ENCODE measurements at regions of chr2 and their contacts with region 1.

Region 1: DNA sequence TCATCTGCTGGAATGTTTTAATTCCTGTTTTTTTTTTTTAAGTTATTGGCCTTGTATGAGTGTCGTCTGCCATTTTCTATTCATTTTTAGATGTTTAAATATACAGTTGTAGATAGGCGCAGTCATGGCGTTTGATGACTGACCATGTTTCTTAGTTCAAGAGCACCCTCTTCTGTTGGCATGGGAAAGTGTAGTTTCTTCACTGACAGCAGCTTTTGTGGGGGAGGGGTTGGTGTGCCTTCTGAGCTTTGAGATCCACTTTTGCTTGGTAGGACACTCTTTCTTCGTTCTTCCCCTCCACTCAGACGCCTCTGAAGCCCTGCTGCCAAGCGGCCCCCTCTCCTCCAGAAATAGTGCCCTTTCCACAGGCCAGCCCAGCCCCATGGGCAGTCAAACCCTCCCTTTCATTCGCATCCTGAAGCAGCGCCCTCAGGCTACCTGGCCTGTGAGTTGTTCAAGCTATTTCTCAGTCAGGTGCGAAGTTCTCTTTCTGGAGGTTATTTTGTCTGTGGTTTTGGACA is 492.0 kb downstream of the TNS1 start:
- DNase-seq: peak; percentile 88
- ATAC-seq: peak; percentile 85
- H3K4me3 ChIP-seq: no peak overlapping the region
- H3K27ac ChIP-seq: no peak overlapping the region
- H3K4me1 ChIP-seq: peaks cover 11% of the 10 kb centered on the region
- H3K27me3 ChIP-seq: no peaks in the 10 kb centered on the region
- CTCF ChIP-seq: peak; percentile 86

Region 2: GRCh38 chr2:216681683-216682082 is 829.1 kb before region 1 on chr2:
- CTCF ChIA-PET with region 1: no interaction called
- POLR2A ChIA-PET with region 1: no interaction called
- intact Hi-C with region 1: loop called (anchors 1 kb)
- DNase-seq: no peak
- ATAC-seq: no peak
- H3K4me3 ChIP-seq: no peak overlapping the region
- H3K27ac ChIP-seq: no peak overlapping the region
- H3K4me1 ChIP-seq: peaks cover 5% of the 10 kb centered on the region; the same call in 1 of the 2 replicates
- H3K27me3 ChIP-seq: no peaks in the 10 kb centered on the region
- CTCF ChIP-seq: no peak

Region 3: GRCh38 chr2:217000404-217000803 is 510.4 kb before region 1 on chr2:
- CTCF ChIA-PET with region 1: no interaction called
- POLR2A ChIA-PET with region 1: no interaction called
- intact Hi-C with region 1: loop called (anchors 1 kb)
- DNase-seq: peak; percentile 27
- ATAC-seq: peak; percentile 64
- H3K4me3 ChIP-seq: no peak overlapping the region
- H3K27ac ChIP-seq: no peak overlapping the region
- H3K4me1 ChIP-seq: no peaks in the 10 kb centered on the region
- H3K27me3 ChIP-seq: no peaks in the 10 kb centered on the region
- CTCF ChIP-seq: peak; percentile 33; the same call in 1 of the 2 replicates

Region 4: GRCh38 chr2:217166241-217166850 is 344.5 kb before region 1 on chr2:
- CTCF ChIA-PET with region 1: interaction called, 3 read pairs
- POLR2A ChIA-PET with region 1: no interaction called
- intact Hi-C with region 1: loop called (anchors 5 kb)
- DNase-seq: peak; percentile 65
- ATAC-seq: no peak; the same call in 1 of the 2 replicates
- H3K4me3 ChIP-seq: no peak overlapping the region
- H3K27ac ChIP-seq: no peak overlapping the region
- H3K4me1 ChIP-seq: peaks cover 27% of the 10 kb centered on the region
- H3K27me3 ChIP-seq: no peaks in the 10 kb centered on the region
- CTCF ChIP-seq: peak; percentile 79

Region 5: GRCh38 chr2:217367464-217367863 is 143.4 kb before region 1 on chr2:
- CTCF ChIA-PET with region 1: no interaction called
- POLR2A ChIA-PET with region 1: no interaction called
- intact Hi-C with region 1: loop called (anchors 2 kb)
- DNase-seq: peak; percentile 90
- ATAC-seq: peak; percentile 79
- H3K4me3 ChIP-seq: no peak overlapping the region
- H3K27ac ChIP-seq: peak overlapping the region; percentile 94
- H3K4me1 ChIP-seq: peaks cover 62% of the 10 kb centered on the region
- H3K27me3 ChIP-seq: no peaks in the 10 kb centered on the region
- CTCF ChIP-seq: no peak

Measured in PC-3 (cell line).